Activated CD4-positive, alpha-beta T cell treated with anti-CD3 and anti-CD28 coated beads, Interleukin-2, amount 10 ng/mL, durations not matched to agents 24 days and 14 days (primary cell): ENCODE measurements at regions of chr19 and their contacts with region 1.

Region 1: DNA sequence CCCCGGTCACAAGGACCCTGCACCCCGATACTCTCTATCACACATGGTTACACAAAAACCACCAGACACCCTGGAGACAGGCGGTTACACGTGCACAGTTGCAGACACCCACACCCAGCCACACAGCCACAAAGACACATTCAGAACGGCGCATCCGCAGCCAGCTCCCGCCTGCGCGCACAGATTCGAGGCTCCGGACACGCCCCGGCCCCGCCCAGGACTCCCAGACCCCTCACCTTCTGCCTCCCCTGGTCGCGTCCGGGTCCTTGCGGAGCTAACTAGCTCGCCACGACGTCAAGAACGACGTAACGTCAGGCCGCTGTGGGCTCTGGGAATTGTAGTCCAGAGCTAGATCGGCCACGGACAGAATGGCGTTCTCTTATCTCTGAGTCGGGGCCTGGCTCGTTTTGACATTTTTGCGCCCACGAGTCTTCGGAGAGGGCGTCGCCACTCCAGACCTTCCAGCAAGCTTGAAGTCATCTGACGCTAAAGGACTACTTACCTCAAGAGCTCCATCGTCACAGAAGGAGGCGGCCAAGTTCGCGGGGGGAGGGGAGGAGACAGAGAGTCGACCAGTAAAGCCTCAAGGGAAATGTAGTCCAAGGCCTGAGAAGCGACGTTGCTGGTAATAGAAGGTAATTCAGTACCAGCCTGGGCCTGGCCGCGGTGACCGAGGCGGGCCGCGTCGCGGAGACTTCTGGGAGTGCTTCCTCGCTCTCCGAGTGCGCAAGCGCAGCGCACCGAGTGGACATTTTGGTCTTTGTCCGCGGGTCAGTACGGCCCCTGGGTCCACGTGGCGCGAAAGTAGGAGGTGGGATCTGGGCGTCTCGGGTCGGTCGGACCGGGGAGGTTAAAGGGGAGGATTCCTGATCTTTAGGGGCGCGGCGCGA is at the starts of genes ZNF146 and ZNF565:
- DNase-seq: peak; percentile 99
- H3K4me3 Mint-ChIP-seq: no peak within 1 kb of the TSS
- H3K27ac Mint-ChIP-seq: no peak within 1 kb of the TSS
- H3K4me1 Mint-ChIP-seq: peaks cover 5% of the 10 kb centered on the region
- H3K27me3 Mint-ChIP-seq: no peaks in the 10 kb centered on the region
- total RNA-seq, gene ZNF146: 84.6 and 90.3 TPM in 2 replicates
- total RNA-seq, gene ZNF565: 1.6 and 2.2 TPM in 2 replicates

Region 2: GRCh38 chr19:36114763-36115452 is 99.7 kb before region 1 on chr19 and contains the start of gene POLR2I:
- intact Hi-C with region 1: loop called (anchors 1 kb)
- DNase-seq: peak; percentile 99
- H3K4me3 Mint-ChIP-seq: peak within 1 kb of the TSS; percentile 94
- H3K27ac Mint-ChIP-seq: peak within 1 kb of the TSS; percentile 95
- H3K4me1 Mint-ChIP-seq: peaks cover 29% of the 10 kb centered on the region
- H3K27me3 Mint-ChIP-seq: peaks cover 4% of the 10 kb centered on the region
- total RNA-seq, gene POLR2I: 83.4 and 86.3 TPM in 2 replicates

Region 3: GRCh38 chr19:36152352-36153091 is 62.1 kb before region 1 on chr19 and contains the start of gene COX7A1:
- intact Hi-C with region 1: no loop called
- DNase-seq: no peak
- H3K4me3 Mint-ChIP-seq: no peak within 1 kb of the TSS
- H3K27ac Mint-ChIP-seq: no peak within 1 kb of the TSS
- H3K4me1 Mint-ChIP-seq: no peaks in the 10 kb centered on the region
- H3K27me3 Mint-ChIP-seq: no peaks in the 10 kb centered on the region
- total RNA-seq, gene COX7A1: not detected in 2 replicates

Region 4: GRCh38 chr19:36378625-36379509 is 164.2 kb after region 1 on chr19 and contains the start of gene ZFP14:
- intact Hi-C with region 1: loop called (anchors 2 kb)
- DNase-seq: peak; percentile 98
- H3K4me3 Mint-ChIP-seq: peak within 1 kb of the TSS; percentile 84
- H3K27ac Mint-ChIP-seq: peak within 1 kb of the TSS; percentile 90
- H3K4me1 Mint-ChIP-seq: peaks cover 14% of the 10 kb centered on the region
- H3K27me3 Mint-ChIP-seq: no peaks in the 10 kb centered on the region
- total RNA-seq, gene ZFP14: 2.2 and 3.2 TPM in 2 replicates

Region 5: GRCh38 chr19:36573020-36573885 is 358.6 kb after region 1 on chr19 and contains the start of gene ZNF529:
- intact Hi-C with region 1: loop called (anchors 1 kb)
- DNase-seq: peak; percentile 97
- H3K4me3 Mint-ChIP-seq: peak within 1 kb of the TSS; percentile 89
- H3K27ac Mint-ChIP-seq: peak within 1 kb of the TSS; percentile 95
- H3K4me1 Mint-ChIP-seq: peaks cover 24% of the 10 kb centered on the region
- H3K27me3 Mint-ChIP-seq: no peaks in the 10 kb centered on the region
- total RNA-seq, gene ZNF529: 16.8 and 17.6 TPM in 2 replicates

Region 6: DNA sequence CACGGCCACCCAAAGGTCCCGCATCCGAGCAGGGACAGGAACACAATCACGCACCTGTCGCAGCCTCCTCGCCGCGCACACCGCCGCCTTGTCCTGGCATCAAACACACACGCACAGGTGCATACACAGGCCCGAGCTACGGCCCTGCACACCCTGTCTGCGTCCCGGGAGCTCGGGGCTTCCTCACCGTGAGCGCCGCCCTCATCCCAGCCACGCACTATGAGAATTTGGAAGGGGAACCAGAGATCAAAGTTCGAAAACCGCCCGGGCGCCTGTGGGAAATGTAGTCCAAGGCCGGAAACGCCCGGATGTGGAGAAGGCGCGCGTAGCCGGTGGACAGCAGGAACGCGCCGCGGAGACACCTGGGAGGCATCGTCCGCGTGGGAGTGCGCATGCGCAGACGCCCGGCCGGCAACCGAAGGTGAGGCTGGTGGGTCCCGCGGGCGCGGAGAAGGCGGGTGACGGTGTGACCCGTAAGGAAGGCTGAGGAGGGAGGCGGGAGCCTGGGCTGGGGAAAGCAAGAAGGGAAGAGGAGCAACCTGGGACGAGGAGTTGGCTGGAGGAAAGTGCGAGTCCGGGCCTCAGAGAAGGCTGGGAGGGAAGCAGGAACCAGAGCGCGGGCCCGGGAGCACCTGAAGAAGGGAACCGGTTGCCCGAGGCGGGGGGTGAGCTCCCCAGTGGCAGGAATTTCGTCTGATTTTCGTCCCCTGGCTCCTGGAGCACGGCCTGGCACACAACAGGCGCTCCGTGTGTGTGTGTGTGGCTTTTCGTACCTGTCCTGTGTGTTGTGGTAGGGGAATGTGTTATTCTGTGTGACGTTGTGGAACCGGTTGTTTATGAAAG is 472.8 kb after region 1 on chr19 and contains the start of gene ZNF567:
- intact Hi-C with region 1: loop called (anchors 1 kb)
- DNase-seq: peak; percentile 99
- H3K4me3 Mint-ChIP-seq: peak within 1 kb of the TSS; percentile 98
- H3K27ac Mint-ChIP-seq: peak within 1 kb of the TSS; percentile 95
- H3K4me1 Mint-ChIP-seq: peaks cover 28% of the 10 kb centered on the region
- H3K27me3 Mint-ChIP-seq: no peaks in the 10 kb centered on the region
- total RNA-seq, gene ZNF567: 8.2 and 8.3 TPM in 2 replicates

Region 7: DNA sequence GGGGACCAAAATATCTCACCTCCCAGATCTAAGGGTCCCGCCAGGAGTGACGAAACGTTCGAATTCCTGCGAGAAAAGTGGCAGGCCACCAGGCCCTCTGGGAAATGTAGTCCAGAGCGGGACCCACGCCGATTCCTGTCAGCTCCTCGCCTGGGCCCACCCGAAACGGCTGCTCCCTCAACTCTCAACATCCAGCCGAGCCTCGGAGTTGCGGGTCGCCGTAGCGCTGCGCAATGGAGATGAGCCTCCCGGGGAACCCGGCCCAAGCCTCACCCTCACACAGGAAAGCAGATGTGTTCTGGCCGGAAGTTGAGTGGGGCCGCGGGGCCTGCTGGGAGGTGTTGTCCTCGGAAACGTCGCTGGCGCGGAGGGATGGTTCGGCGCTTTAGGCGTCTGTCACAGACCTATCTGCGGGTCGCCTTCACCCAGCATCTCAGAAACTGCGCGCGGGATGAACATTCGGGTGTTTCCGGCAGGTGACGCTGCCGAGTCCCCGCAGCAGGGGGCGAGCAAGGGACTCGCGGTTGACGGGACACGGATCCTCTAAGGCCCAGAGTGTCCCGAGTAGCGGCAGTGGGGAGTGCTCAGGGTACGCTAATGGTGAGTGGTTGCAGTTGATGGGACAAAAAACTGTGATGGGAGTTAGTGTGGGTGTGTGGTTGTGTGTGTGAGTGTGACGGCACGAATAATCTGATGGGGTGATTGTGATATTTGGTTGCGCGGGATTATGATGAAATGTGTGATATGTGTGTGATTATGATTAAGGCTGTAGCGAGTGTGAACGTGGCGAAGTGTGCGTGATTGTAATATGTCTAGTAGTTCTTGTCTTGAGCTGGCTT is 701.6 kb after region 1 on chr19 and contains the starts of genes ZNF568 and ZNF829:
- intact Hi-C with region 1: loop called (anchors 10 kb)
- DNase-seq: peak; percentile 97
- H3K4me3 Mint-ChIP-seq: peak within 1 kb of the TSS; percentile 90
- H3K27ac Mint-ChIP-seq: peak within 1 kb of the TSS; percentile 96
- H3K4me1 Mint-ChIP-seq: peaks cover 19% of the 10 kb centered on the region
- H3K27me3 Mint-ChIP-seq: no peaks in the 10 kb centered on the region
- total RNA-seq, gene ZNF568: 4.4 and 6.1 TPM in 2 replicates
- total RNA-seq, gene ZNF829: 4.8 TPM in 2 replicates

Region 8: GRCh38 chr19:37370880-37371661 is 1156.4 kb after region 1 on chr19 and contains the start of gene ZNF527:
- intact Hi-C with region 1: loop called (anchors 2 kb)
- DNase-seq: peak; percentile 99
- H3K4me3 Mint-ChIP-seq: peak within 1 kb of the TSS; percentile 94
- H3K27ac Mint-ChIP-seq: peak within 1 kb of the TSS; percentile 91
- H3K4me1 Mint-ChIP-seq: peaks cover 9% of the 10 kb centered on the region
- H3K27me3 Mint-ChIP-seq: no peaks in the 10 kb centered on the region
- total RNA-seq, gene ZNF527: 3.5 and 4.9 TPM in 2 replicates